ENCODE measurements at regions of chr3 and their contacts with region 1.

Region 1: GRCh38 chr3:104080088-104080627 is 1286.6 kb upstream of the ALCAM start:
- DNase-seq: no peak
- H3K4me3 ChIP-seq: no peak overlapping the region
- H3K27ac ChIP-seq: no peak overlapping the region
- H3K4me1 ChIP-seq: no peaks in the 10 kb centered on the region
- H3K27me3 ChIP-seq: no peaks in the 10 kb centered on the region
- CTCF ChIP-seq: no peak
- EP300 ChIP-seq: no peak
- POLR2A ChIP-seq: no peak
- RAD21 ChIP-seq: no peak

Region 2: GRCh38 chr3:104066658-104067057 is 13.5 kb before region 1 on chr3:
- CTCF ChIA-PET with region 1: no interaction called
- POLR2A ChIA-PET with region 1: no interaction called
- DNase-seq: no peak
- H3K4me3 ChIP-seq: no peak overlapping the region
- H3K27ac ChIP-seq: no peak overlapping the region
- H3K4me1 ChIP-seq: 0 out of 7 replicates have a peak, but pooled peaks cover 0 to 3% (median 0%) of the 10 kb centered on the region in 4 experiments
- H3K27me3 ChIP-seq: no peaks in the 10 kb centered on the region
- CTCF ChIP-seq: no peak
- EP300 ChIP-seq: no peak
- POLR2A ChIP-seq: no peak
- RAD21 ChIP-seq: no peak

Region 3: DNA sequence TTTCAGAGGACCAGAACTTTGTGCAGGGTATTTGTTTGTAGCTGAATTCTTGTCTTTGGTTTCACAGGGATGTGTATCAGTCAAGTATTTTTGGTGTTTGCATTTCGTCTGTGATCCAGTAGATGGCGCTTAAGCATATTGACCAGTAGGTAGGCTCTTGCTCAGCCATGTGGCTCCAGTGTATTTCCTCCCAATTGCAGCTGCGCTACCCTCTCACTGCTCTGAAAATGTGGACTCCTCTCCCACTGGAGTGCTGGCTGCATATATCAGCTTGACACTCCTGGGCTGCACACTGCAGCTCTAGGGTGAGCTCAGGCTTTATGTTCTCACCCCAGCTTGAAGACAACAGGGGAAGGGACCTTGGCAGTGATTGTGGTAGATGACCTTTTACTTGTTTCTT is 22.2 kb after region 1 on chr3:
- CTCF ChIA-PET with region 1: interaction called, 11 read pairs
- POLR2A ChIA-PET with region 1: no interaction called
- DNase-seq: peak in 1 of 2 experiments; percentile 56
- H3K4me3 ChIP-seq: no peak overlapping the region
- H3K27ac ChIP-seq: no peak overlapping the region
- H3K4me1 ChIP-seq: peaks cover 0 to 4% (median 2%) of the 10 kb centered on the region in 4 experiments; a peak in 2 of 7 replicates
- H3K27me3 ChIP-seq: peaks cover 0 to 4% (median 0%) of the 10 kb centered on the region in 4 experiments; a peak in 1 of 7 replicates
- CTCF ChIP-seq: peak; percentile 0 to 86 (median 65)
- EP300 ChIP-seq: no peak
- POLR2A ChIP-seq: no peak
- RAD21 ChIP-seq: peak; percentile 81 to 87